A549 (cell line): ENCODE measurements at regions of chr1 and their contacts with region 1.

Region 1: GRCh38 chr1:207868774-207869721 is 41.9 kb downstream of the CD34 start:
- DNase-seq: peak; percentile 66 to 69
- ATAC-seq: peak; percentile 81 to 89
- H3K4me3 ChIP-seq: peak overlapping the region; percentile 83
- H3K27ac ChIP-seq: peak overlapping the region; percentile 88 to 100
- H3K4me1 ChIP-seq: peaks cover 29% of the 10 kb centered on the region
- CTCF ChIP-seq: peak; percentile 91
- EP300 ChIP-seq: no peak
- POLR2A ChIP-seq: peak; percentile 15; the same call in 1 of the 2 replicates
- RAD21 ChIP-seq: peak; percentile 35 to 68

Region 2: GRCh38 chr1:207619871-207620542 is 249.0 kb before region 1 on chr1:
- CTCF ChIA-PET with region 1: no interaction called
- POLR2A ChIA-PET with region 1: no interaction called
- DNase-seq: peak; percentile 28 to 55
- ATAC-seq: peak; percentile 97 to 99
- H3K4me3 ChIP-seq: no peak overlapping the region
- H3K27ac ChIP-seq: no peak overlapping the region
- H3K4me1 ChIP-seq: no peaks in the 10 kb centered on the region
- CTCF ChIP-seq: peak; percentile 61
- EP300 ChIP-seq: no peak
- POLR2A ChIP-seq: no peak
- RAD21 ChIP-seq: peak; percentile 25 to 27; a peak in 1 of 5 replicates

Region 3: GRCh38 chr1:207828485-207829158 is 40.4 kb before region 1 on chr1:
- CTCF ChIA-PET with region 1: interaction called, 260 read pairs
- POLR2A ChIA-PET with region 1: interaction called, 11 read pairs
- DNase-seq: peak; percentile 86 to 90
- ATAC-seq: peak; percentile 69 to 81
- H3K4me3 ChIP-seq: no peak overlapping the region
- H3K27ac ChIP-seq: peak overlapping the region; percentile 32 to 43; a peak in 4 of 6 replicates
- H3K4me1 ChIP-seq: peaks cover 45% of the 10 kb centered on the region
- CTCF ChIP-seq: peak; percentile 74
- EP300 ChIP-seq: no peak
- POLR2A ChIP-seq: no peak
- RAD21 ChIP-seq: peak; percentile 77 to 80

Region 4: DNA sequence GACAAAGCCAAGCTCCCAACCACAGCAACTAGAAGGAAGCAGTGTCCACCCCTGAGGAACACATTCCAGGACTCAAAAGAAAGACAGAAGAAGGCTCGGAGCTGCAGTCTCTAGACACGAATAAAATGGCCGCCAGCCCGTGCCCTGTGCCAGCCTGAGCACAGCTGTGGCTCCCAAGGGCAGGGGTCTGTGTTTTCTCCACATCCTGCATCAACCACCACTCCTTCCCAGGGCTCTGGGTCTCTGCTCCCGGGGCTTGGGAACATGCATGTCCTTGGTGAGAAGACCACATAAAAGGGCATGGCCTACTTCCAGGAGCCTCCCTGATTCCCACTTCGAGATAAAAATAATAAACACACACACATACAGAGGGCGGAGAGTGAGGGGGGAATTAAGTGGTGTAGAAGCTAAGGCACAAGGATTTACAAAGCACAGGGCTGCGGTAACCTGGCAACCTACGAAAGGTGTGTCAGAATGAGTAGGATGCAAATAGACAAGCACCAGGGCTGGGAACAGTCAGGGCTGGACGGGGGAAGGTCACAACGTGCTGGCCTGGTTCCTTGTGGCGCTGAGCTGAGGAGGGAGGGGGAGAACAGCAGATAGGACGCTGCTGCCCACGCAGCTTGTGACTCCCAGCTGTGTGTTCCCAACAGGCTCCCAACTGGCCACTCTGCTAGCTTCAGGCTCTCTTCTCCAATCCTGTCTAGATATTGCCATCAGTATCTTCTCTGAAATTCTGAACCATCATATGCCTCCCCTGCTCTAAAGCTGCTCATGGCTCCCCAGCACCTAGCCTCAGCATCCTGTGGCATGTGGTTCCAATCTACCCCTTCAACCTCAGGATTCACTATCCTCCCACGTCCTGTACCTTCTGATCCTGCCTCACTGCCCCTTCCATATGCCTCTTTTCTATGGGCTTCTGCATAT is 30.6 kb before region 1 on chr1:
- CTCF ChIA-PET with region 1: interaction called, 21 read pairs
- POLR2A ChIA-PET with region 1: no interaction called
- DNase-seq: no peak
- ATAC-seq: no peak; a peak in 1 of 6 replicates
- H3K4me3 ChIP-seq: no peak overlapping the region
- H3K27ac ChIP-seq: no peak overlapping the region
- H3K4me1 ChIP-seq: no peaks in the 10 kb centered on the region
- CTCF ChIP-seq: no peak
- EP300 ChIP-seq: no peak
- POLR2A ChIP-seq: no peak
- RAD21 ChIP-seq: no peak

Region 5: DNA sequence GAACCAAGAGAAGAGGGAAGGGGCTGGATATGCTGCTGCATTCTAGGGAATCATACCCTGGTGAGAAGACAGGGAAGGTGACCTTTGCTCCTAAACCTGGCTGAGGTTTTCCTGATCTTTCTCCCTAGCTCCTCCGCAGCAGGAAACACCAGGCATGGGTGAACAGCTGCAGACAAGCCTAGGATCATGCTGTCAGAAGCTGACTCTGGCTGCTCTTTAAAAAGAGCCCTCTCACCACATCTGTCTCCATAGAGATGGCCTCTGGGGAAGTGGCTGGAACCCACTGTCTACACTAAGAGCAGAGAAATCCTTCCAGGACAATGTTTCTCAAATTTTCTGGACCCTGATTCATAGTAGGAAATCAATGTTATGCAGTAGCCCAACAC is 15.7 kb before region 1 on chr1:
- CTCF ChIA-PET with region 1: interaction called, 35 read pairs
- POLR2A ChIA-PET with region 1: no interaction called
- DNase-seq: no peak
- ATAC-seq: no peak
- H3K4me3 ChIP-seq: no peak overlapping the region
- H3K27ac ChIP-seq: no peak overlapping the region
- H3K4me1 ChIP-seq: peaks cover 8% of the 10 kb centered on the region
- CTCF ChIP-seq: no peak
- EP300 ChIP-seq: no peak
- POLR2A ChIP-seq: no peak
- RAD21 ChIP-seq: no peak

Region 6: DNA sequence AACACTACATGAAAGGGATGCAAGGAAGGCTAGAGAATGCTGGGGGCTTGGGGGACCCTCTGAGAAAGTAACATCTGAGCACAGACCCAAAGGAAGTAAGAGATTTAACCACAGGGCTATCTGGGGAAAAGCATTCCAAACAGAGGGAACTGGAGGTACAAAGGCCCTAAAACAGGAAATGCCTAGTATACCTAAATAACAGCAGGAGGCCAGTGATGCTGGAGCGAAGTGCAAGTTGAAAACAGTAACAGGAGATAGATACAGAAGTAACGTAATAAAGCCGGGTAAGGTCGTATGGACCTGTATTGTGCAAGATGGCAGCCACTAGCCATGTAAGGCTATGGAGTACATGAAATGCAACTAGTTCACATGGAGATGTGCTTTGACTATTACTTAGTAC is 10.2 kb before region 1 on chr1:
- CTCF ChIA-PET with region 1: interaction called, 35 read pairs
- POLR2A ChIA-PET with region 1: no interaction called
- DNase-seq: no peak
- ATAC-seq: no peak
- H3K4me3 ChIP-seq: no peak overlapping the region
- H3K27ac ChIP-seq: no peak overlapping the region
- H3K4me1 ChIP-seq: no peaks in the 10 kb centered on the region
- CTCF ChIP-seq: no peak
- EP300 ChIP-seq: no peak
- POLR2A ChIP-seq: no peak
- RAD21 ChIP-seq: no peak

Region 7: DNA sequence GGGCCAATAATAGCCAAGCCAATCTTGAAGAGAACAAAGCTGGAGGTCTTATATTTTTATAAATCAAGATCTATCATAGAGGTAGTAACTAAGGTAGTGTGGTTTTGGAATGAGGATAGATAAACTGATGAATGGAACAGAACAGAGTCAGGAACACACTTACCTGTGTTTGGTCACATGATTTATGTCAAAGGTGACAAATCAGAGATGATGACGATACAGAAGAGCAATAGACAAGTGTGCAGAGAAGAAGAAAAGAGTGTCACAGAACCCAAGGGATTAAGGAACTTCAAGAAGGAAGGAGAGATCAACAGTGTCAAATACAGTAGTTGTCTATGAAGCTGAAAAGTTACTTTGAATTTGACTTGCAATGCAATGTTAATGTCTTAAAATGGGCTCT is 57.9 kb after region 1 on chr1:
- CTCF ChIA-PET with region 1: no interaction called
- POLR2A ChIA-PET with region 1: no interaction called
- DNase-seq: no peak
- ATAC-seq: no peak
- H3K4me3 ChIP-seq: no peak overlapping the region
- H3K27ac ChIP-seq: no peak overlapping the region
- H3K4me1 ChIP-seq: no peaks in the 10 kb centered on the region
- CTCF ChIP-seq: no peak
- EP300 ChIP-seq: no peak
- POLR2A ChIP-seq: no peak
- RAD21 ChIP-seq: no peak